ENCODE measurements at regions of chr16 and their contacts with region 1.

Region 1: DNA sequence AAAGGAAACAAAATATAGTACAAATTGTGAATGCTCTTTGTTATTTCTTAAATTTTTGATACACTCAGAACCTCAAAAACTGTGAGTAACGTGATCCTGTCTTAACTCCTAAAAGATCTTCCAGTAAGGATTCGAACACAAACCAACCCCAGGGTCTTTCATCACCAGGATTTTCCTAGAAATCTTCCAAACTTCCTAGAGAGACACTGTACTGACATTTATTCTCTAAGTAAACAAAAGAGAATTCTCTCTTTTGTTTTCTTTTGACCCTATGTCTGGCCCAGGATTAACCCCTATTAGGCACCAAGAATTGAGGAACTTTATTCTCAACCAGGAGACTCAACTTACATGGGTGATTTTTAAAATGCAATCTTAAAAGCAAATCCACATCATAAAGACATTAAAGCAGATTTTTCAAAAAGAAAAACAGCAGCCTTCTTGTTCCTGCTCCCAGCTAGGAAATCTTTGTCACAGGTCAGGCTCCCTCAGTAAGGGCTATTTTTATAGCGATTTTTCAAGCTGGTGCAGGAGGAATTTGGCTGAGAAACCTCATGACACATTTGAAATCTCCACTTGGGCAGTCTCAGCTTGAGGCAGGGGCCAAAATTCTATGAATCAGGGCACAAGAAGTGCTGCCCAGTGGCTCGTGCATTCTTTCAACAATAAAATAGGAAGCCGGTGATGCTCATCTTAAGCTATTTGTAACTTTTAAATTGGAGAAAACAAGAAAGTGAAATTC is 6.2 kb upstream of the SMG1 start:
- DNase-seq: no peak
- H3K4me3 Mint-ChIP-seq: no peak overlapping the region
- H3K27ac Mint-ChIP-seq: no peak overlapping the region
- H3K4me1 Mint-ChIP-seq: peaks cover 2% of the 10 kb centered on the region
- H3K27me3 Mint-ChIP-seq: no peaks in the 10 kb centered on the region

Region 2: GRCh38 chr16:18855196-18855595 is 77.2 kb before region 1 on chr16:
- CTCF ChIA-PET with region 1: no interaction called
- intact Hi-C with region 1: loop called (anchors 10 kb)
- DNase-seq: no peak
- H3K4me3 Mint-ChIP-seq: no peak overlapping the region
- H3K27ac Mint-ChIP-seq: peak overlapping the region; percentile 59
- H3K4me1 Mint-ChIP-seq: peaks cover 4% of the 10 kb centered on the region
- H3K27me3 Mint-ChIP-seq: no peaks in the 10 kb centered on the region

Region 3: DNA sequence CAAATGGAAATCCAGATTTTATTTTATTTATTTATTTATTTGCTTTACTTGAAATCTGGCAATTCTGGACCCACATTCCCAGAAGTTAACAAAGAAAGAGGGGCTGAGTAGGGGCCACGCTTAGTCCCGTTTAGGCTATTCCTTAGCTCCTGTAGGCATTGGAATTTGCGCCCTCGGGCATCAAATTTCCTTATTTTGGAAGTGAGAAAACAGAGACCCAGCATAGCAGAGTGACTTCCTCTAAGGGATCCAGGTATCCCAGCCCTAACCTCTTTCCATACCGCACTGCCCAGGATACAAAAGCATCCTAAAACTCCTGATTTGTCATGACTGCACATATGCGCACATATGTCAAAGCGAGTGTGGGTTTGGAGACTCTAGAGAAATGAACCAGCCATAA is 12.8 kb after region 1 on chr16:
- CTCF ChIA-PET with region 1: interaction called, 4 read pairs
- intact Hi-C with region 1: loop called (anchors 2 kb)
- DNase-seq: no peak
- H3K4me3 Mint-ChIP-seq: no peak overlapping the region
- H3K27ac Mint-ChIP-seq: no peak overlapping the region
- H3K4me1 Mint-ChIP-seq: peaks cover 11% of the 10 kb centered on the region
- H3K27me3 Mint-ChIP-seq: no peaks in the 10 kb centered on the region

Region 4: GRCh38 chr16:18969050-18969854 is 36.8 kb after region 1 on chr16:
- CTCF ChIA-PET with region 1: interaction called, 6 read pairs
- intact Hi-C with region 1: loop called (anchors 5 kb)
- DNase-seq: peak; percentile 89
- H3K4me3 Mint-ChIP-seq: peak overlapping the region; percentile 23
- H3K27ac Mint-ChIP-seq: no peak overlapping the region
- H3K4me1 Mint-ChIP-seq: peaks cover 6% of the 10 kb centered on the region
- H3K27me3 Mint-ChIP-seq: no peaks in the 10 kb centered on the region

Region 5: GRCh38 chr16:19020689-19021088 is 88.3 kb after region 1 on chr16:
- CTCF ChIA-PET with region 1: no interaction called
- intact Hi-C with region 1: no loop called
- DNase-seq: no peak
- H3K4me3 Mint-ChIP-seq: no peak overlapping the region
- H3K27ac Mint-ChIP-seq: no peak overlapping the region
- H3K4me1 Mint-ChIP-seq: no peaks in the 10 kb centered on the region
- H3K27me3 Mint-ChIP-seq: no peaks in the 10 kb centered on the region

Region 6: GRCh38 chr16:19274165-19274797 is 341.9 kb after region 1 on chr16:
- CTCF ChIA-PET with region 1: no interaction called
- intact Hi-C with region 1: no loop called
- DNase-seq: no peak
- H3K4me3 Mint-ChIP-seq: no peak overlapping the region
- H3K27ac Mint-ChIP-seq: no peak overlapping the region
- H3K4me1 Mint-ChIP-seq: no peaks in the 10 kb centered on the region
- H3K27me3 Mint-ChIP-seq: no peaks in the 10 kb centered on the region

Measured in activated naive CD4-positive, alpha-beta T cell treated with anti-CD3 and anti-CD28 coated beads for 36 hours (primary cell).